H1 (cell line): ENCODE measurements at regions of chr1 and their contacts with region 1.

Region 1: GRCh38 chr1:178344513-178345082 is 152.2 kb downstream of the CLEC20A start:
- DNase-seq: no peak
- H3K4me3 ChIP-seq: no peak overlapping the region; a peak in 1 of 8 replicates
- H3K27ac ChIP-seq: no peak overlapping the region
- H3K4me1 ChIP-seq: peaks cover 0 to 17% (median 11%) of the 10 kb centered on the region in 4 experiments; a peak in 4 of 7 replicates
- H3K27me3 ChIP-seq: no peaks in the 10 kb centered on the region
- CTCF ChIP-seq: peak in 2 of 3 experiments; percentile 33 to 57; a peak in 2 of 4 replicates
- EP300 ChIP-seq: no peak
- POLR2A ChIP-seq: no peak
- RAD21 ChIP-seq: peak; percentile 47 to 55

Region 2: DNA sequence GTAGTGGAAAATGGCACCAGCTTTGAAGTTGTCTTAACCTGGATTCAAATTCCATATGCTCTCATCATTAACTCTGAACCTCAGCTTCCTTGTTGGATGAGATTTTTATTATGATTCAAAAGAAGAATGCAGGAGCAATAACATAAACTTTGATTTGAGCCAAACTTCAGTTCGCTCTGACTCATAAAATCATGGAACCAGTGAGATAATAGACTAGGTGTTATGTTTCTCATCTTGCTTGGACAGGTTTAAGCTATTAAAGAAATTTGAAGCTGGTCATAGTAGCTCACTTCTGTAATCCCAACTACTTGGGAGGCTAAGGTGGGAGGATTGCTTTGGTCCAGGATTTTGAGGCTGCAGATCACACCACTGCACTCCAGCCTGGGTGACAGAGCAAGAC is 20.6 kb before region 1 on chr1:
- CTCF ChIA-PET with region 1: interaction called, 18 read pairs
- POLR2A ChIA-PET with region 1: interaction called, 7 read pairs
- DNase-seq: no peak
- H3K4me3 ChIP-seq: no peak overlapping the region
- H3K27ac ChIP-seq: no peak overlapping the region
- H3K4me1 ChIP-seq: no peaks in the 10 kb centered on the region
- H3K27me3 ChIP-seq: no peaks in the 10 kb centered on the region
- CTCF ChIP-seq: no peak
- EP300 ChIP-seq: no peak
- POLR2A ChIP-seq: no peak
- RAD21 ChIP-seq: no peak

Region 3: GRCh38 chr1:178354816-178355215 is 10.2 kb after region 1 on chr1:
- CTCF ChIA-PET with region 1: interaction called, 12 read pairs
- POLR2A ChIA-PET with region 1: interaction called, 5 read pairs
- DNase-seq: no peak
- H3K4me3 ChIP-seq: no peak overlapping the region
- H3K27ac ChIP-seq: no peak overlapping the region
- H3K4me1 ChIP-seq: no peaks in the 10 kb centered on the region
- H3K27me3 ChIP-seq: no peaks in the 10 kb centered on the region
- CTCF ChIP-seq: no peak
- EP300 ChIP-seq: no peak
- POLR2A ChIP-seq: no peak
- RAD21 ChIP-seq: no peak

Region 4: GRCh38 chr1:178371235-178371634 is 26.6 kb after region 1 on chr1:
- CTCF ChIA-PET with region 1: interaction called, 15 read pairs
- POLR2A ChIA-PET with region 1: no interaction called
- DNase-seq: no peak
- H3K4me3 ChIP-seq: peak overlapping the region in 3 of 4 experiments; percentile 2 to 38 (median 10); a peak in 4 of 8 replicates
- H3K27ac ChIP-seq: no peak overlapping the region
- H3K4me1 ChIP-seq: peaks cover 0 to 7% (median 6%) of the 10 kb centered on the region in 4 experiments; a peak in 3 of 7 replicates
- H3K27me3 ChIP-seq: no peaks in the 10 kb centered on the region
- CTCF ChIP-seq: no peak
- EP300 ChIP-seq: no peak
- POLR2A ChIP-seq: no peak
- RAD21 ChIP-seq: no peak